ENCODE measurements at regions of chr3 and their contacts with region 1.

Region 1: DNA sequence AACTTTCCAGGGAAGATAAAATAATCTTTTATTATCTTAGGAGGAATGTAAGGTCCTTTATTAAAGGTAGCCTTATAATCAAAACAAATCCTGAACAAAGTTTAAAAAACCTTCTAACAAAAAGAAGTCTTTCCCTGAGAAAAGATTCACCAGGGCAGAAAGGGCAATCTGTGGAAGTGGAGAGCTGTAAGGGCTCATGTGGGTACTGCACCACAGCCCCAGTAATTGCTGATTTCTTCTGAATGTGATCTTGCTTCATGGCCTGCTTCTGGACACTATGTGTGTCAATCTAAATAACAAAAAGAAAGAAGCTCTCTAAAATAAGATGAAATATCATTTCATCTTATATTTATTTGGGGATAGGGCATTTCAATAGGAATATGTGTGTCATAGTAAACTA is 1501.6 kb downstream of the OTOL1 start:
- DNase-seq: no peak
- H3K4me3 Mint-ChIP-seq: no peak overlapping the region
- H3K27ac Mint-ChIP-seq: no peak overlapping the region
- H3K4me1 Mint-ChIP-seq: no peaks in the 10 kb centered on the region
- H3K27me3 Mint-ChIP-seq: no peaks in the 10 kb centered on the region

Region 2: DNA sequence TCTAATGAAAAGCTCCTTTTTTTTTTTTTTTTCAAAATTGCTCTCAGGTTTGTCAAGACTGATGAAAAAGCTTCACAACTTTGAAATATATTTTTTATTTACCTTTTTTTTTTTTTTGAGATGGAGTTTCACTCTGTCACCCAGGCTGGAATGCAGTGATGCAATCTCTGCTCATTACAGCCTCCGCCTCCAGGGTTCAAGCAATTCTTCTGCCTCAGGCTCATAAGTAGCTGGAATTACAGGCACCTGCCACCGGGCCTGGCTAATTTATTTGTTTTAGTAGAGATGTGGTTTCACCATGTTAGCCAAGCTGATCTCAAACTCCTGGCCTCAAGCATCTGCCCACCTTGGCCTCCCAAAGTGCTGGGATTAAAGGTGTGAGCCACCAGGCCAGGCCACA is 13.4 kb after region 1 on chr3:
- intact Hi-C with region 1: loop called (anchors 1 kb)
- DNase-seq: no peak
- H3K4me3 Mint-ChIP-seq: no peak overlapping the region
- H3K27ac Mint-ChIP-seq: no peak overlapping the region
- H3K4me1 Mint-ChIP-seq: no peaks in the 10 kb centered on the region
- H3K27me3 Mint-ChIP-seq: no peaks in the 10 kb centered on the region

Region 3: GRCh38 chr3:163655021-163655420 is 656.8 kb after region 1 on chr3:
- intact Hi-C with region 1: no loop called
- DNase-seq: no peak
- H3K4me3 Mint-ChIP-seq: no peak overlapping the region
- H3K27ac Mint-ChIP-seq: no peak overlapping the region
- H3K4me1 Mint-ChIP-seq: no peaks in the 10 kb centered on the region
- H3K27me3 Mint-ChIP-seq: no peaks in the 10 kb centered on the region

Measured in activated CD4-positive, alpha-beta T cell treated with anti-CD3 and anti-CD28 coated beads, Interleukin-2, amount 10 ng/mL, durations not matched to agents 24 days and 14 days (primary cell).